GM12878 (cell line): ENCODE measurements at regions of chr3 and their contacts with region 1.

Region 1: DNA sequence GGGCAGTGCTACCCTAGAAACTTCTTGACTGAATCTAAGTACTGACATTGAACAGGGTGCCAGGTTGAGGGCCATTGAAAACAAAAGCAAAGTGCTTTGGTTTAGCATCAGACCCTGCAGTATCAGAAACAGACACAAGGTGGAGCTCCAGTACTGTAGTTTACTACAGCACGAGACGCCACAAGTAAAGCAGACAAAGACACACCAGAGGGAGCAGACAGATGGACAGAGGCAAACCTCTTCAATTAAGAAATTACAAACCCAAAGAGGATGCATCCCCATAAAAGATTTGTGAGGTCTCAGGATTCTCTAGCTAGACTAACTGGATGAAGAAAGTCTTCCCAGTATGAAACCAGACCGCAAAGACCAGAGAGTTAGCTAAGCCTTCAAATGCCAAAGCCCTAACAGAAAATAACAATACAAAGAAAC is 16.6 kb downstream of the TOP2B start:
- DNase-seq: peak; percentile 76
- ATAC-seq: peak; percentile 96
- H3K4me3 ChIP-seq: no peak overlapping the region
- H3K27ac ChIP-seq: no peak overlapping the region
- H3K4me1 ChIP-seq: no peaks in the 10 kb centered on the region
- H3K27me3 ChIP-seq: no peaks in the 10 kb centered on the region
- CTCF ChIP-seq: peak; percentile 87 to 97 (median 93); a peak in 5 of 6 replicates
- EP300 ChIP-seq: no peak
- POLR2A ChIP-seq: no peak
- RAD21 ChIP-seq: peak; percentile 98

Region 2: GRCh38 chr3:25664810-25665314 is 16.7 kb after region 1 on chr3 and contains the start of gene TOP2B:
- CTCF ChIA-PET with region 1: interaction called, 93 read pairs
- POLR2A ChIA-PET with region 1: interaction called, 6 read pairs
- RAD21 ChIA-PET with region 1: interaction called, 44 read pairs
- SMC1A ChIA-PET with region 1: interaction called, 20 read pairs
- in situ Hi-C with region 1: no loop called
- intact Hi-C with region 1: no loop called
- DNase-seq: peak; percentile 81
- ATAC-seq: peak; percentile 90
- H3K4me3 ChIP-seq: peak within 1 kb of the TSS; percentile 72
- H3K27ac ChIP-seq: peak within 1 kb of the TSS; percentile 92
- H3K4me1 ChIP-seq: peaks cover 11% of the 10 kb centered on the region
- H3K27me3 ChIP-seq: no peaks in the 10 kb centered on the region
- CTCF ChIP-seq: no peak
- EP300 ChIP-seq: no peak; a peak in 3 of 4 replicates
- POLR2A ChIP-seq: peak; percentile 85
- RAD21 ChIP-seq: no peak
- polyA plus RNA-seq, gene TOP2B: 34.2 to 57.5 TPM

Region 3: GRCh38 chr3:25831578-25831977 is 183.5 kb after region 1 on chr3:
- CTCF ChIA-PET with region 1: interaction called, 17 read pairs
- POLR2A ChIA-PET with region 1: no interaction called
- RAD21 ChIA-PET with region 1: interaction called, 16 read pairs
- SMC1A ChIA-PET with region 1: interaction called, 10 read pairs
- in situ Hi-C with region 1: no loop called
- intact Hi-C with region 1: loop called (anchors 1 kb)
- DNase-seq: no peak
- ATAC-seq: peak; percentile 66
- H3K4me3 ChIP-seq: no peak overlapping the region
- H3K27ac ChIP-seq: no peak overlapping the region
- H3K4me1 ChIP-seq: peaks cover 5% of the 10 kb centered on the region; the same call in 1 of the 2 replicates
- H3K27me3 ChIP-seq: no peaks in the 10 kb centered on the region
- CTCF ChIP-seq: peak; percentile 25 to 37 (median 30); a peak in 4 of 6 replicates
- EP300 ChIP-seq: no peak
- POLR2A ChIP-seq: no peak
- RAD21 ChIP-seq: peak; percentile 40; the same call in 1 of the 2 replicates

Region 4: DNA sequence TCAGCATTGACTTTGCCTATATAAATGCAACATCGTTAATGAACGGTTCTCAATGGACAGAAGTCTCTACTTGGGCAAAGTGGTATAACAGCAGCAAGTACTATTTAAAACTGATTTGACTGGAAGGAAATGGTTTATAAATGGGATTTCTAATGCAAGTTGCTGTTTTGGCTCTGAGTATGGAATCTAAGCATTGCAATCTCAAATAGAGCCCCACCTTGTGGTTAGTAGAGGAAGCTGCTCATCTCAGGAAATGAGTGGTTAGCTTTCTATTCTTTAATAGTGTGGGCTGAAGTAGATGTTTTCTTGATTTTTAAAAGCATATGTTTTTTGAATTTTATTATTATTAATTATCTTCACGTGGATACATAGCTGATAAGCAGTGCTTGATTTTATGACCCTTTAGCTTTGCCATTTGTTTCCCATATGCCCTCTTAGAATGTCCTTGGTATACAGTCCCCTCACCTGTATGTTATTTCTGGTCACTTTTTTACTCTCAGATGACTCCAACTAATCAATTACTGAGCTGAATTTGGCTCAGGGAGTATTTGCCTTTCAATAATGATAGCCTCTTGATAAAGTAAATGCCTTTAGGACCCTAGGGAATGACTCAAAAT is 208.9 kb after region 1 on chr3:
- CTCF ChIA-PET with region 1: interaction called, 136 read pairs
- POLR2A ChIA-PET with region 1: no interaction called
- RAD21 ChIA-PET with region 1: interaction called, 54 read pairs
- SMC1A ChIA-PET with region 1: interaction called, 121 read pairs
- in situ Hi-C with region 1: loop called (anchors 5 kb)
- intact Hi-C with region 1: loop called (anchors 1 kb)
- DNase-seq: no peak
- ATAC-seq: peak; percentile 95
- H3K4me3 ChIP-seq: no peak overlapping the region
- H3K27ac ChIP-seq: no peak overlapping the region
- H3K4me1 ChIP-seq: no peaks in the 10 kb centered on the region
- H3K27me3 ChIP-seq: peaks cover 0 to 2% of the 10 kb centered on the region in 2 experiments; a peak in 1 of 4 replicates
- CTCF ChIP-seq: peak; percentile 60 to 74 (median 66)
- EP300 ChIP-seq: no peak
- POLR2A ChIP-seq: no peak
- RAD21 ChIP-seq: peak; percentile 74

Region 5: GRCh38 chr3:25897019-25897418 is 248.9 kb after region 1 on chr3:
- CTCF ChIA-PET with region 1: interaction called, 67 read pairs
- POLR2A ChIA-PET with region 1: no interaction called
- RAD21 ChIA-PET with region 1: interaction called, 4 read pairs
- SMC1A ChIA-PET with region 1: interaction called, 12 read pairs
- in situ Hi-C with region 1: loop called (anchors 5 kb)
- intact Hi-C with region 1: loop called (anchors 1 kb)
- DNase-seq: no peak
- ATAC-seq: peak; percentile 98
- H3K4me3 ChIP-seq: no peak overlapping the region
- H3K27ac ChIP-seq: no peak overlapping the region
- H3K4me1 ChIP-seq: no peaks in the 10 kb centered on the region
- H3K27me3 ChIP-seq: no peaks in the 10 kb centered on the region
- CTCF ChIP-seq: peak; percentile 84 to 90 (median 89)
- EP300 ChIP-seq: no peak
- POLR2A ChIP-seq: no peak
- RAD21 ChIP-seq: peak; percentile 81

Region 6: GRCh38 chr3:26118165-26118564 is 470.0 kb after region 1 on chr3:
- CTCF ChIA-PET with region 1: interaction called, 6 read pairs
- POLR2A ChIA-PET with region 1: no interaction called
- RAD21 ChIA-PET with region 1: interaction called, 3 read pairs
- SMC1A ChIA-PET with region 1: interaction called, 8 read pairs
- in situ Hi-C with region 1: loop called (anchors 10 kb)
- intact Hi-C with region 1: loop called (anchors 5 kb)
- DNase-seq: no peak
- ATAC-seq: peak; percentile 72
- H3K4me3 ChIP-seq: no peak overlapping the region
- H3K27ac ChIP-seq: no peak overlapping the region
- H3K4me1 ChIP-seq: no peaks in the 10 kb centered on the region
- H3K27me3 ChIP-seq: no peaks in the 10 kb centered on the region
- CTCF ChIP-seq: peak; percentile 43 to 49 (median 44); a peak in 5 of 6 replicates
- EP300 ChIP-seq: no peak
- POLR2A ChIP-seq: no peak
- RAD21 ChIP-seq: peak; percentile 82

Region 7: GRCh38 chr3:26712211-26713026 is 1064.3 kb after region 1 on chr3:
- CTCF ChIA-PET with region 1: interaction called, 5 read pairs
- POLR2A ChIA-PET with region 1: no interaction called
- RAD21 ChIA-PET with region 1: no interaction called
- SMC1A ChIA-PET with region 1: no interaction called
- in situ Hi-C with region 1: loop called (anchors 10 kb)
- intact Hi-C with region 1: loop called (anchors 5 kb)
- DNase-seq: no peak
- ATAC-seq: peak; percentile 84
- H3K4me3 ChIP-seq: no peak overlapping the region
- H3K27ac ChIP-seq: no peak overlapping the region
- H3K4me1 ChIP-seq: no peaks in the 10 kb centered on the region
- H3K27me3 ChIP-seq: no peaks in the 10 kb centered on the region
- CTCF ChIP-seq: peak; percentile 40 to 58 (median 58); a peak in 5 of 6 replicates
- EP300 ChIP-seq: no peak
- POLR2A ChIP-seq: no peak
- RAD21 ChIP-seq: peak; percentile 79